ENCODE measurements at regions of chr18 and their contacts with region 1.

Region 1: GRCh38 chr18:80034068-80034851 is at the start of gene RBFA:
- DNase-seq: peak; percentile 97
- H3K4me3 ChIP-seq: peak within 1 kb of the TSS; percentile 67 to 97 (median 90)
- H3K27ac ChIP-seq: peak within 1 kb of the TSS; percentile 84
- H3K4me1 ChIP-seq: peaks cover 4% of the 10 kb centered on the region
- H3K27me3 ChIP-seq: no peaks in the 10 kb centered on the region
- CTCF ChIP-seq: peak in 1 of 2 donors; percentile 57
- total RNA-seq, gene RBFA: 29.3 to 35.1 TPM

Region 2: DNA sequence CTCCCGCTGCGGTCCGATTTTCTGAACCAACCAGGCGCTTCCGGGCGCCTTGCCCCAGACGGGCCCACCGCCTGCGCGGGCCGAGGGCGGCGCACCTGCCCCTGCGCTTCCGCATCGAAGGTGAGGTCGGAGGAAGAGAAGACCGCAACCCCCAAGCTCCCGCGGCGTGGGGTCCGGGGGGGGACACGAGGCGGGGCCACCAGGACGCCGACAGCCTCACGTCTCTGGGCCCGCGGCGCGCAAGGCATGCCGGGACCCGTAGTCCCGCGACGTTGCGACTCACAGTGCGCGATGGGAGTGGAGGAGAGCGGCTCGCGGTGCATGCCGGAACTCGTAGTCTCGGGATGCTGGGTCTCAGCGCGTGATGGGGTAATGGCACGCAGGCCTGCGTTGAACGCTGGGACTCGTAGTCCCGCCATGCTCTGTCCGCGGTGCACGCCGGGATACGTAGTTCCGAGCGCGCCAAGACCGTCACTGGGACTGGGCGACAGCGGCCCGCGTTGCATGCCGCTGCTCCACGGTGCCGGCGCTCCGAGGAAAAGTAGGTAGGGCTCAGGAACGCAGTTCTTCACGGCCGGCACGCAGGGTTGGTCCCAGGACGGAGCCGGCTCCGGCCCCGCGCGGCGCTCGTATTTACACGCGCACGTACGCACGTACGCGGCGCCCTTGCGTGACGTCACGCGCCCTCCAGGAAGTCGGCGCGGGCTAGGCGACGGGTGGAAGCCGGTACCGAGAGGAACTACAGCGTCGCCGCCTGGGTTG is 355.0 kb before region 1 on chr18 and contains the start of gene CTDP1:
- CTCF ChIA-PET with region 1: no interaction called
- dilution Hi-C with region 1: no loop called
- in situ Hi-C with region 1: no loop called
- intact Hi-C with region 1: loop called (anchors 1 kb)
- DNase-seq: peak; percentile 99
- H3K4me3 ChIP-seq: peak within 1 kb of the TSS; percentile 84 to 98 (median 98)
- H3K27ac ChIP-seq: peak within 1 kb of the TSS; percentile 94
- H3K4me1 ChIP-seq: peaks cover 22% of the 10 kb centered on the region
- H3K27me3 ChIP-seq: no peaks in the 10 kb centered on the region
- CTCF ChIP-seq: no peak
- total RNA-seq, gene CTDP1: 20.7 to 23.5 TPM

Region 3: DNA sequence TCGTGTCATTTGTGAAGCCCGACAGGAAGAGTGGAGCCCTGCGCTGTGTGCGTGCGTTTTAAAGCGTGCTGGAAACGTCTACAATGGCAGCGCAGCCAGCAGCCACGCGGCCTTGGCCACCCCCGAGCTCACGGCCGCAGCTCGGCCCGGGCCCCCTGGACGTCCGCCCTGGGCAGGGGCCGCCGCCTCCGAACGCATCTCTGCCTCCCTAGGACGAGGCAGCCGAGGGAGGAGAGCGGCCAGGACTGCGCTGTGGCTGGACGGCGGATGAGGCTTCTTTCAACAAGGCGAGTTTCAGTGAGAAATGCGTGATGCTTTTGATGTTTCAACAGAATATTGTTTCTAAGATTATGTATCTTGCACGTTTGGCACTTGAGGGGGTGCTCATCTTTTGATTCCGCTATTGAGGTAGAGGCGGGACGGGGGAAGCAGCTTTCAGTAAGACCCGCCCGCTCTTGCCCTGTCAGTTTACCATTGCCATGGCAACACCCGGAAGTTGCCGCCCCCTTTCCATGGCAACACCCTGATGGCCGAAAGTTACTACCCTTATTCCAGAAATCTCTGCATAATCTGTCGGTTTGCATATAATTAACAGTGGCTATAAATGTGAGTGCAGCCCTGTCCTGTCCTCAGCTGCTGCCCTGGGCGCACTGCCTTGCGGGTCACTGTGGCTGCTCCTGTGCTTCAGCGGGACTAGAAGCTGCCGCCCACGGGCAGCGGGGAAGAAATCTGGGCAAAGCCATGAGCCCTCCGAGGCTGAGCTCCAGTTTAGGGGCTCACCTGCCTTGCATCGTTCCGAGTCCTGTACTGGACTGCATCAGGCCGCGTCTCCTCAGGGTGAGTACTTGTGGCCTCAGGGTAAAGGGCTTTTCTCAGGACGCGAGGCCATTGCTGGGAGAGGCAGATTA is 113.4 kb after region 1 on chr18:
- CTCF ChIA-PET with region 1: no interaction called
- dilution Hi-C with region 1: no loop called
- in situ Hi-C with region 1: no loop called
- intact Hi-C with region 1: loop called (anchors 1 kb)
- DNase-seq: peak; percentile 86
- H3K4me3 ChIP-seq: peak overlapping the region; percentile 68 to 78 (median 72)
- H3K27ac ChIP-seq: peak overlapping the region; percentile 67
- H3K4me1 ChIP-seq: peaks cover 15% of the 10 kb centered on the region
- H3K27me3 ChIP-seq: no peaks in the 10 kb centered on the region
- CTCF ChIP-seq: no peak

Region 4: GRCh38 chr18:80258640-80259039 is 224.4 kb after region 1 on chr18:
- CTCF ChIA-PET with region 1: no interaction called
- dilution Hi-C with region 1: no loop called
- in situ Hi-C with region 1: no loop called
- intact Hi-C with region 1: no loop called
- DNase-seq: no peak
- H3K4me3 ChIP-seq: no peak overlapping the region
- H3K27ac ChIP-seq: no peak overlapping the region
- H3K4me1 ChIP-seq: no peaks in the 10 kb centered on the region
- H3K27me3 ChIP-seq: no peaks in the 10 kb centered on the region
- CTCF ChIP-seq: no peak